Naive thymus-derived CD4-positive, alpha-beta T cell (primary cell): ENCODE measurements at regions of chr12 and their contacts with region 1.

Region 1: GRCh38 chr12:104108755-104109445 is 29.1 kb downstream of the NFYB start:
- DNase-seq: peak; percentile 65 to 87 (median 82)
- ATAC-seq: peak; percentile 99
- H3K4me3 ChIP-seq: no peak overlapping the region
- H3K4me3 Mint-ChIP-seq: peak overlapping the region in 8 of 10 donors; percentile 13 to 77 (median 59)
- H3K27ac ChIP-seq: no peak overlapping the region
- H3K27ac Mint-ChIP-seq: peak overlapping the region in 8 of 9 donors; percentile 0 to 82 (median 37)
- H3K4me1 ChIP-seq: peaks cover 4 to 6% of the 10 kb centered on the region in 2 donors
- H3K4me1 Mint-ChIP-seq: peaks cover 6 to 19% (median 10%) of the 10 kb centered on the region in 7 donors
- H3K27me3 ChIP-seq: no peaks in the 10 kb centered on the region
- H3K27me3 Mint-ChIP-seq: no peaks in the 10 kb centered on the region

Region 2: DNA sequence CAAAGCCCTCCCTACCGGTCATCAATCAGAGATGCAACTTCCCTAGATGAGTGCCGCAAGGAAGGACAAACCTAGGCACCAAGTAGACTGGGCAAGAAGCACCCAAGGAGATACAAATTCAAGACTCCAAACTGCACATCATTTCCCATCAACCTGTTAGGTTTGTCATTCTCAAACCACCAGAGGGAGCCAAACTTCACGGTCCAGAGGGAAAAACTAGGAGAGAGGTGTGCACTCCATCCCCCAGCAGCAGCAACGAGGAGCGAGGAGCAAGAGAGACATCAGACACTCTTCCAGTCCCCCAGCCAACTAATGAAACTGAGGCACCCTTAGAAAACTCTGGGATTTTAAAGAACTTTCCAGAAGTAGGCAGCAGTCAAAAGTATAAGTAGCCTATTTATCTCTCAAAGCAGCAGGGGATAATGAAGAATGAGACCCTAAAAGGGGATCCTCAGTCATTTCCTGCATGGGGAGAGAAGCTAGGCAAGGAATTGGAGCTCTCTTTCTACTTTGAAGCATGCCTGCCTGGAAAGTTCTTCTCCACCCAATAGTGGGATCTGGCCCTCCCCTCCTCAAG is 230.9 kb before region 1 on chr12:
- CTCF ChIA-PET with region 1: interaction called, 26 read pairs
- POLR2A ChIA-PET with region 1: no interaction called
- intact Hi-C with region 1: loop called (anchors 1 kb)
- DNase-seq: peak in 8 of 9 donors; percentile 43 to 61 (median 54)
- ATAC-seq: peak; percentile 83
- H3K4me3 ChIP-seq: no peak overlapping the region
- H3K4me3 Mint-ChIP-seq: peak overlapping the region in 1 of 10 donors; percentile 8
- H3K27ac ChIP-seq: no peak overlapping the region
- H3K27ac Mint-ChIP-seq: peak overlapping the region in 3 of 9 donors; percentile 2 to 80 (median 23)
- H3K4me1 ChIP-seq: no peaks in the 10 kb centered on the region
- H3K4me1 Mint-ChIP-seq: peaks cover 0 to 28% (median 12%) of the 10 kb centered on the region in 7 donors
- H3K27me3 ChIP-seq: no peaks in the 10 kb centered on the region
- H3K27me3 Mint-ChIP-seq: peaks cover 0 to 5% (median 0%) of the 10 kb centered on the region in 5 donors

Region 3: DNA sequence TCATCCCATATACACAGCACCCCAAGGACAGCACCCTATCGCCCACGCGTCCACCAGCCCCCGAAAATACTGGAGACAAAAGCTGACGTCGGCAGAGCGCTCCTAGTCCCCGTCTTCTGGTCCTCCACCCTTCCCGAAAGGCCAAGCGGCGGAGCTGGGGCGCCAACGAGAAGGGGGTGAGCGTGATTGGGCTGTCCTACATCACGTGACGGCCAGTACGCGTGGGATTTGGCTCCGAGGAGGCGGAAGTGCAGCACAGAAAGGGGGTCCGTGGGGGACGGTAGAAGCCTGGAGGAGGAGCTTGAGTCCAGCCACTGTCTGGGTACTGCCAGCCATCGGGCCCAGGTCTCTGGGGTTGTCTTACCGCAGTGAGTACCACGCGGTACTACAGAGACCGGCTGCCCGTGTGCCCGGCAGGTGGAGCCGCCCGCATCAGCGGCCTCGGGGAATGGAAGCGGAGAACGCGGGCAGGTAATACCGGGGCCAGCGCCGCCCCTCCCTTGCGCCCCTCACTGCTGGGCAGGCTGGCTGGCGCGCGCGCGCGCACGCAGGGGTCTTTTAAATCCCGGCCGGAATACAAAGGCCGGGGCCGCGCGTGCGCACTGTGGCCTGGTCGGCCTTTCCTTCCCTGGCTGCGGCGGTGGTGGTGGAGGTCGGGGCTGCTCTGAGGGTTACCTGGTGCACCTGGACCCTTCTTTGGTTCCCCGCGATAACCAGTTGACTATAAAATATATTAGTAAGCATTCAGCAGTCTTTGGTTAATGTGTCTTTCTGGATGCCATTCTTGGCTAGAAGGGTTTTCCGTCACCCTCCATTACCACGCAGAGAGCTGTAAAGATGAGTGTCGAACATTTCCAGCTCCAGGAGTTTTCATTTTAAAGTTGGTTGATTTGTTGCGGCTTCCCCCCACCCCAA is 143.1 kb before region 1 on chr12 and contains the start of gene TDG:
- CTCF ChIA-PET with region 1: interaction called, 10 read pairs
- POLR2A ChIA-PET with region 1: interaction called, 5 read pairs
- intact Hi-C with region 1: loop called in 1 of 2 experiments (anchors 5 kb)
- DNase-seq: peak; percentile 81 to 97 (median 95)
- ATAC-seq: peak; percentile 97
- H3K4me3 ChIP-seq: peak within 1 kb of the TSS; percentile 87
- H3K4me3 Mint-ChIP-seq: peak within 1 kb of the TSS; percentile 92 to 99 (median 97)
- H3K27ac ChIP-seq: peak within 1 kb of the TSS; percentile 94
- H3K27ac Mint-ChIP-seq: peak within 1 kb of the TSS; percentile 96 to 100 (median 99)
- H3K4me1 ChIP-seq: peaks cover 31 to 41% of the 10 kb centered on the region in 2 donors
- H3K4me1 Mint-ChIP-seq: peaks cover 34 to 68% (median 57%) of the 10 kb centered on the region in 7 donors
- H3K27me3 ChIP-seq: no peaks in the 10 kb centered on the region
- H3K27me3 Mint-ChIP-seq: no peaks in the 10 kb centered on the region
- total RNA-seq, gene TDG: 21.5 to 43.0 (median 35.5) TPM

Region 4: DNA sequence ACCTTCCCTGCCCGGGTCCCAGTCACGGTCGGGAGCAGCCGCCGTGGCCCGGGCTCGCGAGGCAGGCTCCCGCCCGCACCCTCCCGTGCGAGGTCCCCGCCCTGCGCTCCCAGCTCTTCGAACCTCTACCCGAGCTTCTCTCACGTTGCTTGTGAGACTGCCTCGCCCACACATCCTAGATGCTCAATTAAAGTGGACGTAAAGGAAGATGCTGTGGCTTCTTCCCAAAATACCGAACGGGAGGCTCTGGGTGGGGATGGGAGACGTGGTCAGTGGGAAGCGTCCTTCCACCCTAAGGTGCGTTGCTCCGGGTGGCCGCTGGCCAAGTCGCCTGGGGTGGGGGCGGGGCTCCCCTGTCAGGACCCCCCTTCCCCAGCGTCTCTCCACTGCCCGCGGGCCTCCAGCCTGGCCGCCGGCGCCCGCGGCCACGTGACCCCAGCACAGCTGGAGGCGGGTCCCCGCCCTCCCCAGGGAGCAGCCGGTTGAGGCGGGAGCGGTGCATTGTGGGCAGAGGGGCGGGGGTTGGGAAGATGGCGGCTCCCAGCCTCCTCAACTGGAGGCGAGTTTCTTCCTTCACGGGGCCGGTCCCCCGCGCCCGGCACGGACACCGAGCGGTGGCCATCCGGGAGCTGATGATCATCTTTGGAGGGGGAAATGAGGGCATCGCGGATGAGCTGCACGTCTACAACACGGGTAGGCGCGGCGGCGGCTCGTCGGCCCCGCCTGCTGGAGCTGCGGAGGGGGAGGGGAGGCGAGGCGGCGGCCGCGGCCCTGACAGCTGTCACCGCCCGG is 44.7 kb before region 1 on chr12 and contains the start of gene HCFC2:
- CTCF ChIA-PET with region 1: interaction called, 46 read pairs
- POLR2A ChIA-PET with region 1: interaction called, 5 read pairs
- intact Hi-C with region 1: no loop called
- DNase-seq: peak; percentile 77 to 93 (median 83)
- ATAC-seq: peak; percentile 99
- H3K4me3 ChIP-seq: peak within 1 kb of the TSS; percentile 95
- H3K4me3 Mint-ChIP-seq: peak within 1 kb of the TSS; percentile 88 to 97 (median 94)
- H3K27ac ChIP-seq: peak within 1 kb of the TSS; percentile 79
- H3K27ac Mint-ChIP-seq: peak within 1 kb of the TSS; percentile 71 to 96 (median 90)
- H3K4me1 ChIP-seq: peaks cover 5 to 9% of the 10 kb centered on the region in 2 donors
- H3K4me1 Mint-ChIP-seq: peaks cover 13 to 31% (median 21%) of the 10 kb centered on the region in 7 donors
- H3K27me3 ChIP-seq: no peaks in the 10 kb centered on the region
- H3K27me3 Mint-ChIP-seq: peaks cover 5 to 27% (median 13%) of the 10 kb centered on the region in 5 donors
- total RNA-seq, gene HCFC2: 11.4 to 20.2 (median 16.2) TPM

Region 5: GRCh38 chr12:104126548-104126947 is 17.6 kb after region 1 on chr12:
- CTCF ChIA-PET with region 1: interaction called, 10 read pairs
- POLR2A ChIA-PET with region 1: no interaction called
- intact Hi-C with region 1: no loop called
- DNase-seq: no peak
- ATAC-seq: no peak
- H3K4me3 ChIP-seq: no peak overlapping the region
- H3K4me3 Mint-ChIP-seq: no peak overlapping the region
- H3K27ac ChIP-seq: no peak overlapping the region
- H3K27ac Mint-ChIP-seq: no peak overlapping the region
- H3K4me1 ChIP-seq: no peaks in the 10 kb centered on the region
- H3K4me1 Mint-ChIP-seq: peaks cover 8 to 29% (median 23%) of the 10 kb centered on the region in 7 donors
- H3K27me3 ChIP-seq: no peaks in the 10 kb centered on the region
- H3K27me3 Mint-ChIP-seq: no peaks in the 10 kb centered on the region